ENCODE measurements at regions of chr20 and their contacts with region 1.

Region 1: GRCh38 chr20:6959900-6960312 is 192.4 kb downstream of the BMP2 start:
- DNase-seq: peak; percentile 29
- H3K4me3 ChIP-seq: no peak overlapping the region
- H3K27ac ChIP-seq: no peak overlapping the region
- H3K4me1 ChIP-seq: no peaks in the 10 kb centered on the region
- H3K27me3 ChIP-seq: no peaks in the 10 kb centered on the region
- CTCF ChIP-seq: no peak

Region 2: GRCh38 chr20:6920991-6921613 is 38.8 kb before region 1 on chr20:
- CTCF ChIA-PET with region 1: no interaction called
- dilution Hi-C with region 1: no loop called
- in situ Hi-C with region 1: no loop called
- intact Hi-C with region 1: no loop called
- DNase-seq: peak; percentile 62
- H3K4me3 ChIP-seq: no peak overlapping the region
- H3K27ac ChIP-seq: peak overlapping the region; percentile 5
- H3K4me1 ChIP-seq: peaks cover 12% of the 10 kb centered on the region
- H3K27me3 ChIP-seq: no peaks in the 10 kb centered on the region
- CTCF ChIP-seq: no peak

Region 3: GRCh38 chr20:7031222-7031621 is 71.3 kb after region 1 on chr20:
- CTCF ChIA-PET with region 1: no interaction called
- dilution Hi-C with region 1: no loop called
- in situ Hi-C with region 1: no loop called
- intact Hi-C with region 1: loop called (anchors 10 kb)
- DNase-seq: no peak
- H3K4me3 ChIP-seq: no peak overlapping the region
- H3K27ac ChIP-seq: no peak overlapping the region
- H3K4me1 ChIP-seq: no peaks in the 10 kb centered on the region
- H3K27me3 ChIP-seq: no peaks in the 10 kb centered on the region
- CTCF ChIP-seq: peak; percentile 29 to 35

Region 4: GRCh38 chr20:7463290-7463689 is 503.4 kb after region 1 on chr20:
- CTCF ChIA-PET with region 1: no interaction called
- dilution Hi-C with region 1: no loop called
- in situ Hi-C with region 1: no loop called
- intact Hi-C with region 1: no loop called
- DNase-seq: no peak
- H3K4me3 ChIP-seq: no peak overlapping the region
- H3K27ac ChIP-seq: no peak overlapping the region
- H3K4me1 ChIP-seq: peaks cover 2% of the 10 kb centered on the region
- H3K27me3 ChIP-seq: no peaks in the 10 kb centered on the region
- CTCF ChIP-seq: no peak